ENCODE measurements at regions of chr7 and their contacts with region 1.

Region 1: DNA sequence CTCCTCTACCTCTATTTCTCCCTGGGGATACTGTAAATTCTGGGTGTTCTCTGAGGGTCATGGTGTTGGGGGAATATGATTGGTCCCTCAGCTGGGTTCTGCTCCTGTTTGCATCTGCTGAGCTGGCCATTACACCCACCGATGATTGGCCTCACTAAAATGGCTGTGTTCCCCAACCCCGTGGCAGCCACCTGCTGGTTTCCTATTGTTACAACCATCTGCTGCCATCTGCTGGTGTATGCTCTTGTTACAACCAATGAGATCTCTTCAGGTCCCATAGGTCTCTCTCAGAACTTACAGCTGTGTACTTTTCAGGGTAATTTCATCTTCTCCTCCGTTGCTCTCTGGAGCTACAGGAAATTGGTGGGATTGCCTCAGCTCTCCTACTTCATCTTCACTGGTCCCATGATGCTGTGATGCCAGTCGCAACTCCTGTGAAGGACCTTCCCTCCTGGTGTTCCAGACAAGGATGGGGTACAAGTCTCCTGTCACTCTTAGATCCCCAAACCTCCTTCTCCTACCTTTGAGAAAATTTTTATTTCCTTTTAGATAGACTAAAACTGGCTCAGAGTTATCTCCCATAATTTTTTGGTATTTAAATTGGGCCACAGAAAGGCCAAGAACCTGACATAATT is 303.5 kb upstream of the SMIM30 start:
- DNase-seq: peak; percentile 87
- H3K4me3 ChIP-seq: no peak overlapping the region
- H3K27ac ChIP-seq: no peak overlapping the region
- H3K4me1 ChIP-seq: no peaks in the 10 kb centered on the region
- H3K27me3 ChIP-seq: no peaks in the 10 kb centered on the region
- CTCF ChIP-seq: peak; percentile 50 to 87 (median 82)
- POLR2A ChIP-seq: no peak

Region 2: DNA sequence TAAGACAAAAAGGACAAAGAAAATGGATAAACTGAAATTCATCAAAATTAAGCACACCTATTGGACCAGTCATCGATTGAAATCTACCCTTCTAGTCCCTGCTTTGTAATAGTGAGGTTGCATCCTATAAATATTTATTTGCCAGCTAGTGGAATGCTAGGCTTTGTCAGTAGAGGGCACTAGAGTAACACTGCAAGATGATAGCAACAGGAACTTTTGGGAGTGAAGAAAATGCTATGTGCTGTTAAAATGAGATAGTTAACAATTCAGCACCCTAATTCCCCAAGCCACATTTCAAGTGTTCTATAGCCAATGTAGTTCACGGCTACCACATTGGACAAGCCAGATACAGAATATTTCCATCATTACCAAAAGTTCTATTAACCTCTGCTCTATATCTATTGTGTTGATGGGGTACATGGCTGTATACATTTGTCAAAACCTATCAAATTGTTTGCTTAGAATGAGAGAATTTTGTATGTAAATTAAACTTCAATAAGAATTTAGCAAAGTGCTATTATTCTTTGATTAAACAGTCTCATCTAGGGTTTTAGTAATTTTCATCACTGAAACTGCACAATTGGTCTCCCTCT is 871.2 kb before region 1 on chr7:
- intact Hi-C with region 1: loop called (anchors 5 kb)
- DNase-seq: peak; percentile 26
- H3K4me3 ChIP-seq: no peak overlapping the region
- H3K27ac ChIP-seq: no peak overlapping the region
- H3K4me1 ChIP-seq: no peaks in the 10 kb centered on the region
- H3K27me3 ChIP-seq: no peaks in the 10 kb centered on the region
- CTCF ChIP-seq: peak; percentile 49 to 88 (median 80)
- POLR2A ChIP-seq: no peak

Region 3: DNA sequence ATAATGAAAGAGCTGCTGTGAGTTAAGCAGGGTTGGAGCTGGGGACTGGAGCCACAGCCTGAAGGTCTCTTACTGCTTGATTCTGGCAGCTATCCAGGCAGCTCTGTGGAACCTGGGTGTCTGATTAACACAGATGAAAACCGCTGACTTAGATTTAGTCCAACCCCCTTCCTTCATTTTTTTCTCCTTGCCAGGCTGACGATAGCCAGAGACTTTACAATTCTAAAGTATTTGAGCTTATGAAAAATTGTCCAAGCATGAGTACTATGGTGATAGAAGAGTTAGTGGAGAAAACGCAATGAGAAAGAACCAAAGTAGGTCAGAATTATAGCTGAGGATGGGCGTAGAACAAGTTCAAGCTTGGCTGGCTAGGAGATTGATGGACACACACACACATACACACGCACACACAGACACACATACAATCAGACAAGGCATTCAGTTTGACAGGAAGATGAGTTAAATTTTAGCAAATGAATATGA is 321.7 kb before region 1 on chr7:
- intact Hi-C with region 1: no loop called
- DNase-seq: peak; percentile 46
- H3K4me3 ChIP-seq: no peak overlapping the region
- H3K27ac ChIP-seq: no peak overlapping the region
- H3K4me1 ChIP-seq: no peaks in the 10 kb centered on the region
- H3K27me3 ChIP-seq: no peaks in the 10 kb centered on the region
- CTCF ChIP-seq: no peak
- POLR2A ChIP-seq: no peak

Region 4: GRCh38 chr7:113159746-113160339 is 262.0 kb before region 1 on chr7:
- intact Hi-C with region 1: loop called (anchors 10 kb)
- DNase-seq: no peak
- H3K4me3 ChIP-seq: no peak overlapping the region
- H3K27ac ChIP-seq: no peak overlapping the region
- H3K4me1 ChIP-seq: no peaks in the 10 kb centered on the region
- H3K27me3 ChIP-seq: no peaks in the 10 kb centered on the region
- CTCF ChIP-seq: peak in 3 of 4 experiments; percentile 19 to 46 (median 41)
- POLR2A ChIP-seq: no peak

Region 5: GRCh38 chr7:113649556-113649955 is 227.7 kb after region 1 on chr7:
- intact Hi-C with region 1: no loop called
- DNase-seq: no peak
- H3K4me3 ChIP-seq: no peak overlapping the region
- H3K27ac ChIP-seq: no peak overlapping the region
- H3K4me1 ChIP-seq: no peaks in the 10 kb centered on the region
- H3K27me3 ChIP-seq: no peaks in the 10 kb centered on the region
- CTCF ChIP-seq: no peak
- POLR2A ChIP-seq: no peak